MCF 10A (cell line): ENCODE measurements at regions of chr1 and their contacts with region 1.

Region 1: GRCh38 chr1:28510665-28511440 is 5.0 kb downstream of the RCC1 start:
- DNase-seq: peak; percentile 68
- H3K4me3 Mint-ChIP-seq: peak overlapping the region; percentile 95
- H3K27ac Mint-ChIP-seq: peak overlapping the region; percentile 98
- H3K4me1 Mint-ChIP-seq: peaks cover 25% of the 10 kb centered on the region
- H3K27me3 Mint-ChIP-seq: no peaks in the 10 kb centered on the region
- CTCF ChIP-seq: no peak

Region 2: GRCh38 chr1:28526889-28527288 is 16.0 kb after region 1 on chr1:
- CTCF ChIA-PET with region 1: no interaction called
- POLR2A ChIA-PET with region 1: no interaction called
- intact Hi-C with region 1: no loop called
- DNase-seq: no peak
- H3K4me3 Mint-ChIP-seq: no peak overlapping the region
- H3K27ac Mint-ChIP-seq: peak overlapping the region; percentile 7
- H3K4me1 Mint-ChIP-seq: peaks cover 4% of the 10 kb centered on the region
- H3K27me3 Mint-ChIP-seq: no peaks in the 10 kb centered on the region
- CTCF ChIP-seq: no peak

Region 3: DNA sequence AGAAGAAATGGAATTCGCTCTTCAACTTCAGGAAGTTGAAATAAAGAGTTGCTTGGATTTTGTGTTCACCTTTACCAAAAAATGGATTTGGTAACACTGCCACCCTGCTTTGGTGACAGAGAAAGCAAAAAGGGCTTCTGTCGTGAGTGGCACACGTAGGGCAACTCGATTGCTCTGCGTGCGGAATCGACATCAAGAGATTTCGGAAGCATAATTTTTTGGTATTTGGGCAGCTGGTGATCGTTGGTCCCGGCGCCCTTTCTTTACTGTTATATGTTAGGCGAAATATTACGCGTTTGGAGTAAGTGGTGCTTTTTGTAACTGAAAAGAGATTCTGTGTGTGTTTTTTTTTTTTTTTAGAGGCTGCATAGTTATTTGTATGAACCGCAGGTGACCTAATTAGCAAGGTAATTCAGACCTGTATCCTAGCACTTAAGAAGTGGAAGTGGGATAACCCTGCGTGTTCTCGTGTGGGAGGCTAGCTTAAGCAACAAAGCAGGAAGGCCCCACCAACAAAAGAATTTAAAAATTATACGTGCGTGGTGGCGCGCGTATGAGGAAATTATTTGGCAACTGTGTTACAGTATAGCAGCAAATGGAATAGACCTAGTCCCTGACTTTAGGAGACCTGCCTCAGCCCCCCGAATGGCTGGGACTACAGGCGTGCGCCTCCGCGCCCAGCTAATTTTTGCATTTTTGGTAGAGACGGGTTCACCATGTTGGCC is 137.8 kb after region 1 on chr1 and contains the start of gene RNU11:
- CTCF ChIA-PET with region 1: no interaction called
- POLR2A ChIA-PET with region 1: interaction called, 48 read pairs
- intact Hi-C with region 1: no loop called
- DNase-seq: peak; percentile 97
- H3K4me3 Mint-ChIP-seq: peak within 1 kb of the TSS; percentile 77
- H3K27ac Mint-ChIP-seq: peak within 1 kb of the TSS; percentile 100
- H3K4me1 Mint-ChIP-seq: peaks cover 25% of the 10 kb centered on the region
- H3K27me3 Mint-ChIP-seq: no peaks in the 10 kb centered on the region
- CTCF ChIP-seq: no peak
- total RNA-seq, gene RNU11: not detected in 2 replicates